ENCODE measurements at regions of chr17 and their contacts with region 1.

Region 1: DNA sequence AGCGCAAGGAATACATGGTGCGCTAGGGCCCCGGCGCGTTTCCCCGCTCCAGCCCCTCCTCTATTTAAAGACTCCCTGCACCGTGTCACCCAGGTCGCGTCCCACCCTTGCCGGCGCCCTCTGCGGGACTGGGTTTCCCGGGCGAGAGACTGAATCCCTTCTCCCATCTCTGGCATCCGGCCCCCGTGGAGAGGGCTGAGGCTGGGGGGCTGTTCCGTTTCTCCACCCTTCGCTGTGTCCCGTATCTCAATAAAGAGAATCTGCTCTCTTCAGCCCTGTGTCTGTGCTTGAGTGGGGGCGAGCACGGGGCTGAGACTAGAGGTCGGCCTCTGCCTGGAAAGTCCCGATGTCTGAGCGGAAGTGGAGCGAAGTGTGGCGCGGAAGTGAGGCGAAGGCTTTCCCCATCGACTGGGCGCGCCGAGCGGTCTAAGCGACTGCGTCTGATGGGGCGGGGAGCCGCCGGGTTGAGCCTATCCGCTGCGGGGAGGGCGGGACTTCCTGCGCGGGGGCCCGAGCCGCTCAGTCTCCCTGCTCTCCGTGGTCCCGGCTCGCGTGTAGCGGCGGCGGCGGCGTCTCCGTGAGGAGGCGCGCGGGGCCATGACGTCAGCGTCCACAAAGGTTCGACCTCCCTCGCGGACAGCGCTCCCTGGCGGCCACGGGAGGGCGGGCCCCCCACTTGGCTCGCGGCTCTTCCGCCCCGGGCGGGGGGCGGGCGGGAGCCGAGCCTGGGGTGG is 2.0 kb downstream of the RNASEK start:
- DNase-seq: peak; percentile 94 to 99
- ATAC-seq: peak; percentile 75 to 92 (median 79)
- H3K4me3 ChIP-seq: peak overlapping the region; percentile 92
- H3K4me3 Mint-ChIP-seq: peak overlapping the region; percentile 97
- H3K27ac ChIP-seq: peak overlapping the region; percentile 97
- H3K27ac Mint-ChIP-seq: peak overlapping the region; percentile 96 to 100
- H3K4me1 ChIP-seq: peaks cover 78% of the 10 kb centered on the region
- H3K4me1 Mint-ChIP-seq: peaks cover 80 to 86% of the 10 kb centered on the region in 2 donors
- H3K27me3 ChIP-seq: no peaks in the 10 kb centered on the region
- H3K27me3 Mint-ChIP-seq: no peaks in the 10 kb centered on the region
- CTCF ChIP-seq: peak; percentile 73

Region 2: GRCh38 chr17:6651357-6651918 is 363.0 kb before region 1 on chr17 and contains the starts of genes C17orf100 and MED31:
- intact Hi-C with region 1: loop called (anchors 5 kb)
- DNase-seq: peak; percentile 89 to 97
- ATAC-seq: peak; percentile 88 to 98 (median 92)
- H3K4me3 ChIP-seq: peak within 1 kb of the TSS; percentile 61
- H3K4me3 Mint-ChIP-seq: peak within 1 kb of the TSS; percentile 96
- H3K27ac ChIP-seq: peak within 1 kb of the TSS; percentile 91
- H3K27ac Mint-ChIP-seq: peak within 1 kb of the TSS; percentile 95 to 96
- H3K4me1 ChIP-seq: peaks cover 25% of the 10 kb centered on the region
- H3K4me1 Mint-ChIP-seq: peaks cover 41 to 47% of the 10 kb centered on the region in 2 donors
- H3K27me3 ChIP-seq: peaks cover 13% of the 10 kb centered on the region
- H3K27me3 Mint-ChIP-seq: peaks cover 13 to 24% of the 10 kb centered on the region in 2 donors
- CTCF ChIP-seq: no peak
- total RNA-seq, gene C17orf100: 0.68 to 0.87 (median 0.82) TPM
- total RNA-seq, gene MED31: 8.3 to 26.1 (median 19.1) TPM

Region 3: GRCh38 chr17:6753006-6753445 is 261.4 kb before region 1 on chr17:
- intact Hi-C with region 1: loop called (anchors 10 kb)
- DNase-seq: peak; percentile 56 to 80
- ATAC-seq: peak; percentile 59 to 78 (median 60)
- H3K4me3 ChIP-seq: no peak overlapping the region
- H3K4me3 Mint-ChIP-seq: peak overlapping the region; percentile 78
- H3K27ac ChIP-seq: peak overlapping the region; percentile 60
- H3K27ac Mint-ChIP-seq: peak overlapping the region; percentile 90 to 97
- H3K4me1 ChIP-seq: peaks cover 54% of the 10 kb centered on the region
- H3K4me1 Mint-ChIP-seq: peaks cover 55 to 57% of the 10 kb centered on the region in 2 donors
- H3K27me3 ChIP-seq: no peaks in the 10 kb centered on the region
- H3K27me3 Mint-ChIP-seq: no peaks in the 10 kb centered on the region
- CTCF ChIP-seq: no peak

Region 4: DNA sequence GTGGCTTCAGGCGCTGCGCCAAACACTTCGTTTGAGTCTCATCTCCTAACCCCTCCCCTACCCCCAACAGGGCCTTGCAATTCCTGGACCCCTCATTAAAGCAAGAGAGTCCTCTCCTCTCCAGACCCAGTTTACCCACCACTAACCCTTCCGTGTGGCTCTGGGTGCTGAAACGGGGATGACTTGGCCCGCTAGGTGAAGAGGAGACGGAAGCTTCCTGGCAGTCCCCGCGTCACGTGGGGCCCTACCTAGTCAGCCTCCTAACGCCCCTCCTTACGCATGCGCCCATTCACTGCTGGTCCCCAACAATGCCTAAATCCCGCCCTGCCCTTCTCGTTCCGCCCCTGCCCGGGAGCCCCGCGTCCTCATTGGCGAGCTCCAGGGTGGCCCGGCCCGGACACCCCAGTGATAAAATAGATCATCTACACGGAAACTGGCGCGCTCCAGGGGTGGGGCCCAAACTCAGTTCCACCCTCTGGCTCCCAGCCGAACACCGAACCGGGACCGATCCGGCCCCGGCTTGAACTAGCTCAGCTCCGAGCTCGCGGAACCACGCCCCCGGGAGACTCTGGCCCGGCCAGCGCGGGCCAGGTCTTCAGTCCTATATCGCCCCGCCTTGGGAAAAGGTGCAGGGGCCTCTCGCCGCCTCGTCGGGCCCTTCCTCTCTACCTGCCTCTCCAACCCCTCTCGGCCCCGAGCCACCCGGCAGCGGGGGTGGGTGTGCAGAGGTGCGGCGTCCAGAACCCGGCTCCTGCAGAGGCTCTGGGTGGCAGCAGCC is 21.4 kb after region 1 on chr17 and contains the start of gene SLC16A13:
- intact Hi-C with region 1: loop called (anchors 1 kb)
- DNase-seq: peak; percentile 95 to 100
- ATAC-seq: peak; percentile 93 to 98 (median 94)
- H3K4me3 ChIP-seq: peak within 1 kb of the TSS; percentile 76
- H3K4me3 Mint-ChIP-seq: peak within 1 kb of the TSS; percentile 93
- H3K27ac ChIP-seq: peak within 1 kb of the TSS; percentile 95
- H3K27ac Mint-ChIP-seq: peak within 1 kb of the TSS; percentile 98 to 99
- H3K4me1 ChIP-seq: peaks cover 47% of the 10 kb centered on the region
- H3K4me1 Mint-ChIP-seq: peaks cover 53 to 61% of the 10 kb centered on the region in 2 donors
- H3K27me3 ChIP-seq: no peaks in the 10 kb centered on the region
- H3K27me3 Mint-ChIP-seq: no peaks in the 10 kb centered on the region
- CTCF ChIP-seq: no peak
- total RNA-seq, gene SLC16A13: 4.8 to 7.0 (median 6.0) TPM

Measured in natural killer cell (primary cell).